IMR-90 (cell line): ENCODE measurements at regions of chr16 and their contacts with region 1.

Region 1: DNA sequence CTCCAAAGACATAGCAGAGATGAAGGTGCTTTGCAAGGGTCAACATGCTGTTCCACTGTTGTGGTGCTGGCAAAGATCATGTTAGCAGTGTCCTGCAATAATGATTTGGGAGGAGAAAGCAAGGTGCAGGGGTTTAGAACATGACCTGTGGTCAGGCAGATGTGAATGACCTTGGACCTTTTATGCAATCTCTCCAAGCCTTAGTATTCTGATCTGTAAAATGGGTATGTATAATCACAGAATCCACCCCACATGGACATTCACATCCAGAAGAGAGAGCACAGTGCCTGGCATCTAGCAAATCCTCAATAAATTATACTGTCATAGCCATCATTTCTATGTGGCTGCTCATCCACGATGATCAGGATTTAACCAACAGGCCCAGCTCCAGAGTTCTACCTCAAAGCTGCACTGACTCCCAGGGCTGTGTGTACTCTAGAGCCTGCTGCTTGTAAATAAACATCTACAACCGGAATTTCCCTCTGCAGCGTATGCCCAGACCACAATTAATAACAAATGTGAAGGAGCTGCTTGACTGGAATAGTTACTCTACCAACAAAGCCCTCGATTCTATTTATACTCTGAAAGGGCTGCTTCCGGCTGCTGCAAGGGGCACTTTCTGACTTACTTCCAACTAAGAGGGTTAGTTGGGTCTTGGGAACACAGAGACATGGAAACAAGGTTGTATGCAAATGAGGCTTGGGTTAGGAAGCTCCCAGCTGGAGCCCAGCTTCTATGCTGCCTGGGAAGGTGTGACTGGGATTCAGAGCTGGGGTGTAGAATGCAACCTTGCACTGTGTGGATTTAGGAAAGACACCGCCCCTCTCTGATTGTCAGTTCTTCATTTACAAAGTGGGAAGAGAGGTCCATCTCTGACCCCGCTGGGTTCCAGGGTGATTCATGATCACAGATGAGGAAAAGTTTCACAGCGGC is 265.2 kb downstream of the XYLT1 start:
- DNase-seq: peak; percentile 87
- ATAC-seq: peak; percentile 95
- H3K4me3 ChIP-seq: no peak overlapping the region
- H3K27ac ChIP-seq: no peak overlapping the region
- H3K4me1 ChIP-seq: peaks cover 4% of the 10 kb centered on the region
- H3K27me3 ChIP-seq: no peaks in the 10 kb centered on the region
- CTCF ChIP-seq: no peak
- POLR2A ChIP-seq: no peak
- RAD21 ChIP-seq: no peak

Region 2: GRCh38 chr16:17266608-17267313 is 61.2 kb after region 1 on chr16:
- CTCF ChIA-PET with region 1: no interaction called
- POLR2A ChIA-PET with region 1: no interaction called
- dilution Hi-C with region 1: no loop called
- in situ Hi-C with region 1: no loop called
- intact Hi-C with region 1: loop called (anchors 10 kb)
- DNase-seq: no peak
- ATAC-seq: no peak
- H3K4me3 ChIP-seq: no peak overlapping the region
- H3K27ac ChIP-seq: no peak overlapping the region
- H3K4me1 ChIP-seq: peaks cover 1% of the 10 kb centered on the region
- H3K27me3 ChIP-seq: no peaks in the 10 kb centered on the region
- CTCF ChIP-seq: no peak
- POLR2A ChIP-seq: no peak
- RAD21 ChIP-seq: no peak

Region 3: GRCh38 chr16:17397499-17397891 is 191.9 kb after region 1 on chr16:
- CTCF ChIA-PET with region 1: no interaction called
- POLR2A ChIA-PET with region 1: interaction called, 15 read pairs
- dilution Hi-C with region 1: no loop called
- in situ Hi-C with region 1: no loop called
- intact Hi-C with region 1: no loop called
- DNase-seq: peak; percentile 83
- ATAC-seq: peak; percentile 86
- H3K4me3 ChIP-seq: no peak overlapping the region
- H3K27ac ChIP-seq: no peak overlapping the region
- H3K4me1 ChIP-seq: peaks cover 8% of the 10 kb centered on the region
- H3K27me3 ChIP-seq: no peaks in the 10 kb centered on the region
- CTCF ChIP-seq: no peak
- POLR2A ChIP-seq: no peak
- RAD21 ChIP-seq: no peak